Ascending aorta (tissue), 2 donors: ENCODE measurements at regions of chr5 and their contacts with region 1.

Region 1: DNA sequence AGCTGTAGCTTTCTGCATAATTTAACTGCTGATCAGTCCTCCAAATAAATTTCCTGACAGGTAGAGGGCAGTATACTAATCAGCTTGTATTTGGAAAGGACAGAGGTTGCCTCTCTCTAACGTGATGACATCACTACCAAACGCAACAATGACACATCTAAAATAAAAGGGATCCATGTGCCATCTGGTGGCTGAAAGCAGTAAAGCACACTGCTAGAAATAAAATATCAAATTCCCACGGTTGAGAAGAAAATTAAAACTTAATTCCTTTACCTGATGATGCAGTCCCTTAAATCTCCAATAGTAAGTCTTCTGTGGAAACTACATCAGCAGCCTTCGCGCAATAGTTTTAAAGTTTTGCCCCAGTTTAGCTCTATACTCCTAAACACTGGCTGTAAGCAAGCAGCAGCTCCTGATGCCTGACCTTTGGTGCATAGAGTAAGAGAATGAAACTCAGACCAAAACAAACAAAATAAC is 54.5 kb downstream of the DIAPH1 start:
- DNase-seq: peak in 1 of 2 donors; percentile 82
- H3K4me3 ChIP-seq: no peak overlapping the region
- H3K27ac ChIP-seq: peak overlapping the region; percentile 63 to 71
- H3K4me1 ChIP-seq: peaks cover 4 to 26% of the 10 kb centered on the region in 2 donors
- H3K27me3 ChIP-seq: no peaks in the 10 kb centered on the region
- CTCF ChIP-seq: peak; percentile 86 to 96 (median 94)

Region 2: DNA sequence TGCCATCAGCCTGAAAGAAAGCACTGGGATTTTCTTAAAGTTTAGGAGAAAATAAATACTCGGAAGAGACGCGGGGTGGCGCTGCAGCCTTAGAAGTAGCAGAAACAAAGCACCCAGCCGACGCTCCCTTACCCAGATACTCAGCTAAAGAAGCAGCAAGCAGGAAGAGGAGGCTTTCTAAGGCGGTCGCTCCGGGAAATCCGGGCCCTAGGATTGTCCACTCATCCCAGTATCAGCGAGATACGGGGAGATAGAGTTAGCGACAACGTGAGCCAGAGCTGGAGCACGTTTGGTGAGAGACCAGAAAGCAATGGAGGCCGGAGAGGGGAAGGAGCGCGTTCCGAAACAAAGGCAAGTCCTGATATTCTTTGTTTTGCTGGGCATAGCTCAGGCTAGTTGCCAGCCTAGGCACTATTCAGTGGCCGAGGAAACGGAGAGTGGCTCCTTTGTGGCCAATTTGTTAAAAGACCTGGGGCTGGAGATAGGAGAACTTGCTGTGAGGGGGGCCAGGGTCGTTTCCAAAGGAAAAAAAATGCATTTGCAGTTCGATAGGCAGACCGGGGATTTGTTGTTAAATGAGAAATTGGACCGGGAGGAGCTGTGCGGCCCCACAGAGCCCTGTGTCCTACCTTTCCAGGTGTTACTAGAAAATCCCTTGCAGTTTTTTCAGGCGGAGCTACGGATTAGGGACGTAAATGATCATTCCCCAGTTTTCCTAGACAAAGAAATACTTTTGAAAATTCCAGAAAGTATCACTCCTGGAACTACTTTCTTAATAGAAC is 469.6 kb before region 1 on chr5 and contains the start of gene PCDHB2:
- intact Hi-C with region 1: loop called (anchors 5 kb)
- DNase-seq: no peak
- H3K4me3 ChIP-seq: peak within 1 kb of the TSS; percentile 0 to 48
- H3K27ac ChIP-seq: no peak within 1 kb of the TSS
- H3K4me1 ChIP-seq: no peaks in the 10 kb centered on the region
- H3K27me3 ChIP-seq: no peaks in the 10 kb centered on the region
- CTCF ChIP-seq: peak in 1 of 3 experiments; percentile 33
- total RNA-seq, gene PCDHB2: 1.4 TPM

Region 3: DNA sequence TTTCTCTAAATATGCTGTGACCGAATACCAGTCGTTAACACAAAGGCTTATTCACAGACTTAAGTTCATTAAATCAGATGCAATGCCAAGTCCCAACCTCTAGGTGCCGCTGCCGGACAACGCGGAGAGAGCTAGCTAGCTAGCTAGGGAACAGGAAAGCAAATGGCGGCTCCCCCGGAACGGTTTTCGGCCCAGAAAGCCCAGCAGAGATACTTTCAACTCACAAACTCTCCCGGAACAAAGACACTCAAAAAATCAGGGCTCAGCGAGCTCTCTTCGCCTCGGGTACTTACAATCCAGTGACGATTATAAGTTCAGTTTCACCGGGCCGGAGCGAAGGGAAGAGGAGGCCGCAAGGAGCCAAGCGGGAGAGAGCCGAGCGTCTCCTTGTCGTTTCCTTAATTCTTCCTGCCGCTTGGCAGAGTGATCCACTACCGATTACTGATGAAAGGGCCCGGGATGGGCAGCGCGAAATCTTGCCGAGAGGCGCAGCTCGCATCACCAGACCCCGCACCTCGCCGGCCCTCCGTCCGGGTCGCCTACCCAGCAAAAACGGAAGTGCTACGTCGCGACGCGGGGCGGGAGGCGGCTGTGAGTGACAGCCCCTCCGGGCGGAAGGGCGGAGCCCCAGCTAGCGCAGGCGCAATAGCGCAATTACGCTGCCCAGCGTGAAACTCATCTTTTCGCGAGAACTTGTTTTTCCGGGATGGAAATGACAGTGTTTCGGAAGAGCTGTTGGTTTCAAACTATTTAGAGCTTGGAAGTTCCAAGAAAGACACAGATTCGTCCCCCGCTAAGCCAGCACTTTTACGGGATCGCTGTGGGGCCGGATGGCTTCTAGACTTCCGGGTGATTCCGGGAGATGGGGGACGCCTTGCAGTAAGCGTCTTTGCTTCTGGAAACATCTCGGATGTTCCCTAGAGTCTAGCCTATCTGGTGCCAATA is 243.8 kb before region 1 on chr5 and contains the start of gene TAF7:
- intact Hi-C with region 1: loop called (anchors 1 kb)
- DNase-seq: peak; percentile 47 to 91
- H3K4me3 ChIP-seq: peak within 1 kb of the TSS; percentile 76 to 92
- H3K27ac ChIP-seq: peak within 1 kb of the TSS; percentile 93 to 99
- H3K4me1 ChIP-seq: peaks cover 0 to 4% of the 10 kb centered on the region in 2 donors
- H3K27me3 ChIP-seq: no peaks in the 10 kb centered on the region
- CTCF ChIP-seq: peak; percentile 61 to 86 (median 86)
- total RNA-seq, gene TAF7: 30.1 TPM

Region 4: DNA sequence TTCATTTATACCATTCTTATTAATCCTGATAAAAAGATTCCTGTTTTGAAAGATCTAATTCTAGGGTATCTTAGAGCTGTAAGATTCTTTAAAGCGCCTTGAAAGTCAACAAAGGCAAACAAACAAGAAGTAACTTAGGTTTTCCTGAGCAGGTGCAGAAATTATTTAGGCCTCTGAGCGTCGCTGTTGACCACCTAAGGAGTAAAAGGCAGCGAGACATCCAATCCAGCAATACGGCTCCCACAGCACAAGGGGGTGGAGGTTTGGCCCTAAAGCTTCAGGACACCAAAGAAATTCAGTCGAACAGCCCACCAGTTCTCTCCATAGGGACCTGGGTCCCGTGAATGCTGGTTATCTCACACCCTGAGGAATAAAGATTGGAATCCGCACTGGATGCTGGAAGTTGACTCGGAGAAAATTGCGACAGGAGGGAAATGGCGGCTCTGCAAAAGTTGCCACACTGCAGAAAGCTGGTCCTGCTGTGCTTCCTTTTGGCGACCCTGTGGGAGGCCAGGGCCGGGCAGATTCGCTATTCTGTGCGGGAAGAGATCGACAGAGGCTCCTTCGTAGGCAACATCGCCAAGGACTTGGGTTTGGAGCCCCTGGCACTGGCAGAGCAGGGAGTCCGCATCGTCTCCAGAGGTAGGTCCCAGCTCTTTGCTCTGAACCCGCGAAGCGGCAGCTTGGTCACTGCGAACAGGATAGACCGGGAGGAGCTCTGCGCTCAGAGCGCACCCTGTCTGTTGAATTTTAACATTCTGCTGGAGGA is 225.5 kb before region 1 on chr5 and contains the start of gene PCDHGA2:
- intact Hi-C with region 1: loop called (anchors 5 kb)
- DNase-seq: no peak
- H3K4me3 ChIP-seq: peak within 1 kb of the TSS; percentile 37 to 49
- H3K27ac ChIP-seq: no peak within 1 kb of the TSS
- H3K4me1 ChIP-seq: no peaks in the 10 kb centered on the region
- H3K27me3 ChIP-seq: no peaks in the 10 kb centered on the region
- CTCF ChIP-seq: peak; percentile 40 to 46 (median 41)
- total RNA-seq, gene PCDHGA2: 4.9 TPM

Region 5: DNA sequence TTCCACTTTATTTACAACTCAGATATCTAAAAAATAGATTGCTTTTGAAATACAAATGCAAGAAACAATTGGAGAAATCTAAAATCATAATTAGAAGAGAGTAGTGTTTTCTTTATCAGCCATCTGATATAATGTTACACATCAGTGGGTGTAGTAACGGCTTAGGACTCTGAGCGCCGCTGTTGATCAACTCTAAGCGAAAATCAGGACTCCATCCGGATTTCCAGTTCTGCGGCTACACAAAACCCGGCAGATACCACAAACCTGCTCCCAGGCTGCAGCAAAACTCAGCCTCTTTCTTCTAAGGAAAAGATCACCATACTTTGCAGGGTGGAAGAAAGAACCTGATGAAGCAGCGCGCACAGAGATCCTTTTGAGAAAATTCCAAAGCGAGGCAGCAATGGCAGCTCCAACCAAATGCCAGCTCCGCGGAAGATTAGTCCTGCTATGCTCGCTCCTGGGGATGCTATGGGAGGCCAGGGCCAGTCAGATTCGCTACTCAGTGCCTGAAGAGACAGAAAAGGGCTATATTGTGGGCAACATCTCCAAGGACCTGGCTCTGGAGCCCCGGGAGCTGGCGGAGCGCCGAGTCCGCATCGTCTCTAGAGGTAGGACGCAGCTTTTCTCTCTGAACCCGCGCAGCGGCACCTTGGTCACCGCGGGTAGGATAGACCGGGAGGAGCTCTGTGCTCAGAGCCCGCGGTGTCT is 161.5 kb before region 1 on chr5 and contains the start of gene PCDHGA9:
- intact Hi-C with region 1: loop called (anchors 5 kb)
- DNase-seq: no peak
- H3K4me3 ChIP-seq: peak within 1 kb of the TSS; percentile 37 to 45
- H3K27ac ChIP-seq: no peak within 1 kb of the TSS
- H3K4me1 ChIP-seq: no peaks in the 10 kb centered on the region
- H3K27me3 ChIP-seq: no peaks in the 10 kb centered on the region
- CTCF ChIP-seq: peak in 2 of 3 experiments; percentile 20 to 23
- total RNA-seq, gene PCDHGA9: 3.2 TPM

Region 6: GRCh38 chr5:141420855-141421496 is 143.3 kb before region 1 on chr5 and contains the start of gene PCDHGA11:
- intact Hi-C with region 1: loop called (anchors 5 kb)
- DNase-seq: no peak
- H3K4me3 ChIP-seq: peak within 1 kb of the TSS; percentile 40 to 44
- H3K27ac ChIP-seq: no peak within 1 kb of the TSS
- H3K4me1 ChIP-seq: no peaks in the 10 kb centered on the region
- H3K27me3 ChIP-seq: no peaks in the 10 kb centered on the region
- CTCF ChIP-seq: peak in 1 of 3 experiments; percentile 26
- total RNA-seq, gene PCDHGA11: 5.3 TPM